ENCODE measurements at regions of chr19 and their contacts with region 1.

Region 1: GRCh38 chr19:44954824-44955586 is at the start of gene CLPTM1:
- DNase-seq: peak; percentile 93
- H3K4me3 Mint-ChIP-seq: peak within 1 kb of the TSS; percentile 96
- H3K27ac Mint-ChIP-seq: peak within 1 kb of the TSS; percentile 93
- H3K4me1 Mint-ChIP-seq: peaks cover 40% of the 10 kb centered on the region
- H3K27me3 Mint-ChIP-seq: no peaks in the 10 kb centered on the region
- total RNA-seq, gene CLPTM1: 86.1 and 93.1 TPM in 2 replicates

Region 2: GRCh38 chr19:44689056-44689895 is 265.7 kb before region 1 on chr19:
- intact Hi-C with region 1: loop called (anchors 1 kb)
- DNase-seq: peak; percentile 65
- H3K4me3 Mint-ChIP-seq: no peak overlapping the region
- H3K27ac Mint-ChIP-seq: peak overlapping the region; percentile 6
- H3K4me1 Mint-ChIP-seq: peaks cover 56% of the 10 kb centered on the region
- H3K27me3 Mint-ChIP-seq: peaks cover 11% of the 10 kb centered on the region

Region 3: DNA sequence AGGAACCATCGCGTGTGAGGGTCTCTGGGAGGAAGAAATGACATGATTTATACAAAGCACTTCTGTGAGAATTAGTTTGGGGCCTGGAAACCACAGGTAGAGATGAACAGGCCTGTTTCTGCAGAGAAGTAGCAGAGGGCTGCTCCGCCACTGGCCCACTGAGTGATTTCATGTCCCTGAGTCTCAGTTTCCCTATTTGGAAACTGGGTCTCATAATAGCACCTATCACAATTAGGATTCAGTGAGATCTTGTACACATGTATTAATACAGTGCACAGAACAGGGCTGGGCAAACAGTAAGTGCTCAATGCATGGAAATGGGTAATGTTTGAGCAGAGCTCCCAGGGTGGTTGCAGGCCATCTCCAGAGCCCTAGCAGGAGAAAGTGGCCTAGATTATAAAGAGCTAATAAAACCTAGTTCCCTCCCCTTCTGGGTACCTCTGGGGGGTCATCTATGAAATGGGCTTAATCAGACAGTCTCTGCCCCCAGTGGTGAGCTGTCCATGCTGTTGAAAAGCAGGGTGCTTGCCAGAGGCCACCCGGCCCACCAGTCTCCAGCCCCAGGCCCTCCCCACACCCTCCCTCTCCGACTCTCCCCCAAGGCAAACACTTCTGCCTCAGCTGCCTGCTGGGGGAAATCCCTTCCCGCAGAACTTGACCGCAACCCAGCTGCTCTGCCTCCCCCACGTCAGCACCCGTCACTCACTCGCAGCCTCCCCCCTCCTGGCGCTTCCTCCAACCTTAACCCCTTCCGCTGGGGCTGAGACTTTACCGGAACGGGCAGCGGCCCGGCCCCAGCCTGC is 202.0 kb before region 1 on chr19:
- intact Hi-C with region 1: loop called (anchors 1 kb)
- DNase-seq: peak; percentile 95
- H3K4me3 Mint-ChIP-seq: peak overlapping the region; percentile 88
- H3K27ac Mint-ChIP-seq: peak overlapping the region; percentile 90
- H3K4me1 Mint-ChIP-seq: peaks cover 60% of the 10 kb centered on the region
- H3K27me3 Mint-ChIP-seq: no peaks in the 10 kb centered on the region

Region 4: DNA sequence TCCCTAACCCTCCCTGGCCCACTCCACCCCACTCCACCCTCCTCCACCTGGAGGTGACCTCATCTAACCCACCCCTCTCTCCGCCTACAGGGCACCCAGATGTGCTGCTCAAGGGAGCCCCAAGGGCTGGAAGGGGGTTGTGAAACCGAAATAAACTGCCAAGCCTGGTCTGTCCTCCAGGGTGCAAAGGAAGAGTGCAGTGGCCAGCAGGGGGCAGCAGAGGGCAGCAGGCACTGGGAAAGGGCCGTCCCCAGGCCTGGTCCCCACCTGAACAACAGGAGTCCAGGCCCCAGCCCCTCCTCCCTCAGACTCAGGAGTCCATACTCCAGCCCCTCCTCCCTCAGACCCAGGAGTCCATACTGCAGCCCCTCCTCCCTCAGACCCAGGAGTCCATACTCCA is 154.5 kb before region 1 on chr19:
- intact Hi-C with region 1: loop called (anchors 5 kb)
- DNase-seq: peak; percentile 78
- H3K4me3 Mint-ChIP-seq: no peak overlapping the region
- H3K27ac Mint-ChIP-seq: no peak overlapping the region
- H3K4me1 Mint-ChIP-seq: peaks cover 9% of the 10 kb centered on the region
- H3K27me3 Mint-ChIP-seq: peaks cover 13% of the 10 kb centered on the region

Region 5: DNA sequence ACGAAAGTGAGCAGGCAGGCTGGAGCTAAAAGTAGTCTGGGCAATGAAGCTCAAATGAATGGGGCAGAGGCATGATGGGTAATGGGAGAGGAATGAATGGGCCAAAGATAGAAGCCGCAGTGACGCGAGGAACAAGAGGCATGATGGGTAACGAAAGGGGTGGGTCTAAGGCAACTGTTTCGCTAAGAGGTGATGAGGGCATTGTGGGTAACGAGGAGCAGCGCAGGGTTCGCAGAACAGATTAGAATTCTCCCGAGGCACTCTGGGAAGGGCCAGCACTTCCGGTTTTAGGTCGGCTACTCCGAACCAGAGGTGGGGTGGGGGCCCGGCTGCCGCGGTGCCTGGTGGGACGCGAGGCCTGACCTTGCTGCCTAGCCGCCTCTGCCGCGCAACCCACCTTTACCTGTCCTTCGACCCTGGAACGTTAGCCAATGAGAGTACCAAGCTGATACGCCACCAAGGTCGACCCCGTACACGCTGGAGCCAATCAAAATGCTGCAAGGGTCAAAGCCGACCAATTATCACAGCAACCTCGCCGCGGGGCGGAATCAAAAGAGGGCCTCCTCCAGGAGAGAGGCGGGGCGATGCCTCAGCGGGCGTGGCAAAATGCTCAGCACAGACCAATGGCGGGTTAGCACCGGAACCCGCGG is 64.5 kb before region 1 on chr19:
- intact Hi-C with region 1: loop called (anchors 1 kb)
- DNase-seq: peak; percentile 100
- H3K4me3 Mint-ChIP-seq: peak overlapping the region; percentile 86
- H3K27ac Mint-ChIP-seq: peak overlapping the region; percentile 96
- H3K4me1 Mint-ChIP-seq: peaks cover 30% of the 10 kb centered on the region
- H3K27me3 Mint-ChIP-seq: no peaks in the 10 kb centered on the region

Region 6: GRCh38 chr19:44912854-44913253 is 42.2 kb before region 1 on chr19:
- intact Hi-C with region 1: loop called (anchors 1 kb)
- DNase-seq: no peak
- H3K4me3 Mint-ChIP-seq: peak overlapping the region; percentile 68
- H3K27ac Mint-ChIP-seq: peak overlapping the region; percentile 34
- H3K4me1 Mint-ChIP-seq: peaks cover 24% of the 10 kb centered on the region
- H3K27me3 Mint-ChIP-seq: peaks cover 23% of the 10 kb centered on the region

Region 7: GRCh38 chr19:44943801-44944249 is 11.2 kb before region 1 on chr19:
- intact Hi-C with region 1: no loop called
- DNase-seq: no peak
- H3K4me3 Mint-ChIP-seq: no peak overlapping the region
- H3K27ac Mint-ChIP-seq: no peak overlapping the region
- H3K4me1 Mint-ChIP-seq: no peaks in the 10 kb centered on the region
- H3K27me3 Mint-ChIP-seq: no peaks in the 10 kb centered on the region

Region 8: GRCh38 chr19:45038931-45039893 is 84.2 kb after region 1 on chr19 and contains the start of gene CLASRP:
- intact Hi-C with region 1: loop called (anchors 1 kb)
- DNase-seq: peak; percentile 87
- H3K4me3 Mint-ChIP-seq: peak within 1 kb of the TSS; percentile 93
- H3K27ac Mint-ChIP-seq: peak within 1 kb of the TSS; percentile 95
- H3K4me1 Mint-ChIP-seq: peaks cover 23% of the 10 kb centered on the region
- H3K27me3 Mint-ChIP-seq: no peaks in the 10 kb centered on the region
- total RNA-seq, gene CLASRP: 106 and 116 TPM in 2 replicates

Region 9: GRCh38 chr19:45051929-45052579 is 97.0 kb after region 1 on chr19:
- intact Hi-C with region 1: no loop called
- DNase-seq: no peak
- H3K4me3 Mint-ChIP-seq: no peak overlapping the region
- H3K27ac Mint-ChIP-seq: no peak overlapping the region
- H3K4me1 Mint-ChIP-seq: peaks cover 7% of the 10 kb centered on the region
- H3K27me3 Mint-ChIP-seq: no peaks in the 10 kb centered on the region